ENCODE measurements at regions of chr9 and their contacts with region 1.

Region 1: GRCh38 chr9:31759703-31760102 is 624.7 kb upstream of the ACO1 start:
- DNase-seq: no peak
- H3K4me3 Mint-ChIP-seq: no peak overlapping the region
- H3K27ac Mint-ChIP-seq: no peak overlapping the region
- H3K4me1 Mint-ChIP-seq: peaks cover 4% of the 10 kb centered on the region
- H3K27me3 Mint-ChIP-seq: no peaks in the 10 kb centered on the region

Region 2: GRCh38 chr9:31699836-31700235 is 59.9 kb before region 1 on chr9:
- CTCF ChIA-PET with region 1: no interaction called
- intact Hi-C with region 1: loop called (anchors 10 kb)
- DNase-seq: no peak
- H3K4me3 Mint-ChIP-seq: no peak overlapping the region
- H3K27ac Mint-ChIP-seq: no peak overlapping the region
- H3K4me1 Mint-ChIP-seq: peaks cover 12% of the 10 kb centered on the region
- H3K27me3 Mint-ChIP-seq: no peaks in the 10 kb centered on the region

Region 3: DNA sequence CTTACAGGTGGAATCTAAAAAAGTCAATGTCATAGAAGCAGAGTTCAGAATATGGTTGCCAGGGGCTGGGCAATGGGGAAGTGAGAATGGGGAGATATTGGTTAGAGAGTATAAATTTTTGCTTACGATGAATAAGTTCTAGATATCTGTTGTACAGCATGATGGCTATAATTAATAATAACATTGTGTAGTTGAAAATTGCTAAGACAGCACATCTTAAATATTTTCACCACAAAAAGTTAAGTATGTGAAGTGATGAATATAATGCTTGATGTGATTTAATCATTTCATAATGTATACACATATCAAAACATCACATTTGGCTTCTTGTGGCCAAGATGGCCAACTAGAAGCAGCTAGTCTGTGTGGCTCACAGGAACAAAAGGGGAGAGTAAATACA is 198.9 kb after region 1 on chr9:
- CTCF ChIA-PET with region 1: no interaction called
- intact Hi-C with region 1: no loop called
- DNase-seq: no peak
- H3K4me3 Mint-ChIP-seq: no peak overlapping the region
- H3K27ac Mint-ChIP-seq: no peak overlapping the region
- H3K4me1 Mint-ChIP-seq: no peaks in the 10 kb centered on the region
- H3K27me3 Mint-ChIP-seq: peaks cover 9% of the 10 kb centered on the region